ENCODE measurements at regions of chr2 and their contacts with region 1.

Region 1: DNA sequence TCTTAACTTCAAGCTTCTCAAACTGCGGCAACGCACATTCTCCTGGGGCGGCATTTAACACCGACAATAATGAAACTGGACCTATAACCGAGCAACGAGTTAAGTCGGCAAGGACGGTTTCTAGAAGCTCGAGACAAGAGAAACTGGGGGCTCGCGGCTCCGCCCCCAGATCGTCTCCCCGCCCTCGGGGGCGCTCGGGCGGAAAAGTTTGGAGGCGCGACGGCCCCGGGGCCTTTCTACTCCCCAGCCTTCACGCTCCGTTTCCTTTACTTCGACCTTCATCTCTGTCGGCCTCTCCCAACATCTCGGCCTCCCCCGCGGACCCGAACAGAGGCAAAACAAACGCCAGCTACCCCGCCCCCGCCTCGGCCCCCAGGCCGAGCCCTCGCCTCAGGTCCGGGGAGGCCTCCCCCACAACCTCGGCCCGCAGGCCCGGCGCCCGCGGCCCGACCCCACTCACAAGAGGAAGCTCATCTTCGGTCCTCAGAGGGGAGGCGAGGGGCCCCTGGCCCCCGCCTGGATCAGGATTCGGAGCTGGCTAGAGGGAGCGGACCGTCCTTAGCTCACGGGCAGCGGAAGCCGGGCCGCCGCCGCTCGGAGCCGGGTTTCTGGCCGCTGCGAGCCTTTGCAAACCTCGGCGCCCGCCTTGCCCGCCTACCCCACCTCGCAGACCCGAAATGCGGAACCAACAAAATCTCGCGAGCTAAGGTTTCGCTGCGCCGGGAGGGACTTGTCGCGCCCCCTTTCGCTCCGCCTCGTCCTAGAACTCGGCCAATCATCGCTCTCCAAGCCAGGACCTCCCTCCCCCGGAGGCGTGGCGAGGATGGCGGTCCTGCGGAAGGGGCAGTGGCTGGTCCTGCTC is at the start of gene MOB1A:
- DNase-seq: peak; percentile 94 to 98 (median 97)
- ATAC-seq: peak; percentile 90 to 91
- H3K4me3 Mint-ChIP-seq: peak within 1 kb of the TSS; percentile 82 to 95 (median 91)
- H3K27ac Mint-ChIP-seq: peak within 1 kb of the TSS; percentile 82 to 98 (median 96)
- H3K4me1 Mint-ChIP-seq: peaks cover 6 to 55% (median 34%) of the 10 kb centered on the region in 4 donors
- H3K27me3 Mint-ChIP-seq: no peaks in the 10 kb centered on the region
- polyA plus RNA-seq, gene MOB1A: 111 to 152 (median 145) TPM

Region 2: GRCh38 chr2:73828818-73829570 is 349.4 kb before region 1 on chr2 and contains the start of gene STAMBP:
- POLR2A ChIA-PET with region 1: interaction called, 10 read pairs
- DNase-seq: peak; percentile 78 to 96 (median 88)
- ATAC-seq: peak; percentile 88 to 94
- H3K4me3 Mint-ChIP-seq: peak within 1 kb of the TSS; percentile 90 to 99 (median 96)
- H3K27ac Mint-ChIP-seq: peak within 1 kb of the TSS; percentile 93 to 99 (median 97)
- H3K4me1 Mint-ChIP-seq: peaks cover 37 to 60% (median 51%) of the 10 kb centered on the region in 4 donors
- H3K27me3 Mint-ChIP-seq: no peaks in the 10 kb centered on the region
- polyA plus RNA-seq, gene STAMBP: 32.3 to 44.3 (median 35.0) TPM

Region 3: DNA sequence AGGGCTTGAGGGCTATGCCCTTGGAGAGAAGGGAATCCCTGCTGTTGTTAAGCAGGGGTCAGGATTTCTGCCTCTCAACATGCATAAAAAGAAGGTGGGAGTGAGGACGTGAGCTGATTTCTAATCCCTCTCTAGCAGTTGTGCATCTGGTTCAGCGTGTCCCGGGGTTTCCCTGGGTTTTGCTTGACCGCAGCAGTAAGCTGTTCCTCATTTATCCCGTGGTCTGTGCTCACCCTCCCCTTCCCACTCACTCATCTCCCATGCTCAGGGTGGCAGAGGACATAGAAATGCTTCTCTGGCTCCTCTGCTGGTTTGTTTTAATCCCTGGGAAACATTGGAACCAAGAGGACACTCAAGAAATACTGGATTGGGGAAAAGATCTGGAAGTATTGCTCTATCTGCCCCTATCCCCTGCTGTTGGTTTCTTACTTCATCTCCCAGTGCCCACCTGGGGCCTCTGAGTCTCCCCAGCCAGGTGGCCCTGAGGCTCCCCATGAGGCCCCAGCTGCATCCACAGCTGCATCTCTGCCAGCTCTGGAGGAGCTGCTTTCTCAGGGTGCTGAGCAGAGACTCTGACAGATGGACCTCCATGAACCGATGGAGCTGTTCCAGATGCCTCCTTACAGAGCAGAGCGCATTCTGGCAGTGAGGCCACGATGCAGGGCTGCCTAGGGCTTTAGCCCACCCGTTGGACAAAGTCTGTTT is 157.6 kb before region 1 on chr2:
- POLR2A ChIA-PET with region 1: no interaction called
- DNase-seq: no peak
- ATAC-seq: peak in 1 of 2 donors; percentile 35
- H3K4me3 Mint-ChIP-seq: peak overlapping the region in 3 of 10 donors; percentile 11 to 45 (median 43)
- H3K27ac Mint-ChIP-seq: peak overlapping the region in 8 of 10 donors; percentile 58 to 86 (median 78)
- H3K4me1 Mint-ChIP-seq: peaks cover 22 to 75% (median 65%) of the 10 kb centered on the region in 4 donors
- H3K27me3 Mint-ChIP-seq: no peaks in the 10 kb centered on the region

Region 4: DNA sequence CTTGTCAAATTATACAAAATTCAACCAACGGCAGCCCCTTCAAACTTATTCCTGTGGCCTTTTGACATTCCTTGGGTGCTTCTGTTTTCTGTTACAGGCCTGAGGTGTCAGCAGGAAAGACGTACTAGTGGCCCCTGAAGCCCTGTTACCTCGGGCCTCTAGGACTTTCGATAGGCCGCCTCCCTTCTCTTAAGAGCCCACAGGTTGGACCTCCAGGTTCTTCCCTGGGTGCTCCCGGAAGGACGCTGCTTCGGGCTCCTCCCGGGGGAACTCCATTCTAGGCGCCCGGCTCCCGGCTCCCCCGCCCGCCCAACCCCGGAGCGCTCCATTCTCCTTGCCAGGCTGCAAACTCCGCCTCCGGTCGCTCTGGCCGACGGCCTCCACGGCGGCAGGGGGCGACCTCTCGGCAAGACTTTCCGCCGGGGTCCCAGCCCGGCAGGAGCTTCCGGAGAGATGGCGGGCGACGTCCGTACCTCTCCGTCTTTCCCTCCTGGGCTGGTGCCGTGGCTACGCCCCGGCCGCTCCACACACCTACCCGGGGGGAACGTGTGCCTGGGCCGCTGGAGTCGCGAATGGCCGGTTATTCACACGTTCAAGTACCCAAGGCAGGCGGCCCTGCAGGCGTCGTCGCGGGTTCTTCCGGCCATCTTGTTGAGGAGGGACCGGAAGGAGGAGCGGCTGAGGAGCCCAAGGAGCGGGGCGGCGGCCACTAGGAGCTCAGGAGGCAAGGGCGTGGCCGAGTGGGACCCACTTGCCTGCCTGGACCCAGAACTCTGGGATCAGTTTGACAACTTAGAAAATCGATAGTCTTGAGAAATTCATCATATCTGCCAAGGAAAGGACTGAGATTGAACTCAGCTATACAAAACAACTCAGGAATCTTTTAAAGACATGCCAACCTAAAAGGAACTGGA is 58.3 kb before region 1 on chr2:
- POLR2A ChIA-PET with region 1: interaction called, 17 read pairs
- DNase-seq: peak; percentile 68 to 88 (median 82)
- ATAC-seq: peak; percentile 97
- H3K4me3 Mint-ChIP-seq: peak overlapping the region; percentile 83 to 93 (median 86)
- H3K27ac Mint-ChIP-seq: peak overlapping the region; percentile 72 to 96 (median 93)
- H3K4me1 Mint-ChIP-seq: peaks cover 0 to 7% (median 5%) of the 10 kb centered on the region in 4 donors
- H3K27me3 Mint-ChIP-seq: peaks cover 0 to 4% (median 2%) of the 10 kb centered on the region in 5 donors

Region 5: DNA sequence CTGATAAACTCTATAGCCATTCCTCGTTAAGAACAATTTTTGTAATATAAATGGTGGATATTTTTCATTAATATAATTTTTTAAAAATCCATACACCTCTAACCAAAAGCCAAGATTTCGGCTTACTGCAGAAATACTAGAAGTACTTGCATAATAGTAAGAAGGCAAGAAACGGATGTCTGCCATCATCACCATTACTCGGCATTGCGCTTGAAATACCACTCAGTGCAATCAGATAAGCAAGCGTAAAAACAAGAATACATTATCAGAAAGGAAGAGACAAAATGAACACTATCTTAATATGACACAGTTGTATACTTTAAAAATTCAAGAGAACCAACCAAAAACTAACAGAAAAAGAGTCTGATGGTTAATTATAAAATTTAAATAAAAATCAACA is 15.5 kb before region 1 on chr2:
- POLR2A ChIA-PET with region 1: interaction called, 14 read pairs
- DNase-seq: no peak
- ATAC-seq: no peak
- H3K4me3 Mint-ChIP-seq: no peak overlapping the region
- H3K27ac Mint-ChIP-seq: no peak overlapping the region
- H3K4me1 Mint-ChIP-seq: peaks cover 0 to 24% (median 5%) of the 10 kb centered on the region in 4 donors
- H3K27me3 Mint-ChIP-seq: no peaks in the 10 kb centered on the region

Region 6: DNA sequence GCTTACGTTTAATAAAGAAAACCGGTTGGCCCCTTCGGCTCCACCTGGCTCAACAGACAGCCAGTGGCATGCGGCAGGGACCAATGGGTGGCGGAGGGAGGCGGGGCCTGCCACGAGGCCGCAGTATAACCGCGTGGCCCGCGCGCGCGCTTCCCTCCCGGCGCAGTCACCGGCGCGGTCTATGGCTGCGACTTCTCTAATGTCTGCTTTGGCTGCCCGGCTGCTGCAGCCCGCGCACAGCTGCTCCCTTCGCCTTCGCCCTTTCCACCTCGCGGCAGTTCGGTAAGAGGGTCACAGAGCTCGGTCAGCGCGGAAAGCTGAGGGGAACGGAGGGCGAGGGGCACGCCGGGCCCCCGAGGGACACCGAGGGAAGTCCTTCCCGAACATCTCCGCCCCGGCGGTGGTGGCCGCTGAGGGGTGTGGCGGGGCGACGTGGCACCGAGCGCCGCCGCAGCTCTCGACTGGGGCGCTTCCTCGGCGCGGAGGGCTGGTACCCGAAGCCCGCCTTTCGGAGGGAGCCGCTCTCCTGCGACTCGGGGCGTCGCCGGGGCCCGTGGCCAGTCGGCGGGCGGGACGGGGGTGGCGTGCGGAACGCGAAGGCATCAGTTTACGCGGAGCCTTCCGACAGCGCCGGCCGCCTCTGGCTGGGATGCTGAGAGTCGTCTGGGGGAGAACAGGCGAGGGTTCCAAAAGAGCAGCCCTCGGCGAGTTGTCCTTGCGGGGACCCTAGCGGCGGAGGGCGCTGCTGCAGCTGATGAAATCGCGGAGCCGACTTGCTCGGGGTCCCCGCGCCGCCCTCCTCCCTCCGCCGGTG is 20.2 kb after region 1 on chr2 and contains the start of gene MTHFD2:
- POLR2A ChIA-PET with region 1: interaction called, 80 read pairs
- DNase-seq: peak; percentile 79 to 93 (median 85)
- ATAC-seq: peak; percentile 86 to 88
- H3K4me3 Mint-ChIP-seq: peak within 1 kb of the TSS; percentile 95 to 100 (median 98)
- H3K27ac Mint-ChIP-seq: peak within 1 kb of the TSS; percentile 97 to 99 (median 99)
- H3K4me1 Mint-ChIP-seq: peaks cover 16 to 33% (median 25%) of the 10 kb centered on the region in 4 donors
- H3K27me3 Mint-ChIP-seq: peaks cover 0 to 3% (median 0%) of the 10 kb centered on the region in 5 donors
- polyA plus RNA-seq, gene MTHFD2: 4.8 to 5.9 (median 5.4) TPM

Region 7: DNA sequence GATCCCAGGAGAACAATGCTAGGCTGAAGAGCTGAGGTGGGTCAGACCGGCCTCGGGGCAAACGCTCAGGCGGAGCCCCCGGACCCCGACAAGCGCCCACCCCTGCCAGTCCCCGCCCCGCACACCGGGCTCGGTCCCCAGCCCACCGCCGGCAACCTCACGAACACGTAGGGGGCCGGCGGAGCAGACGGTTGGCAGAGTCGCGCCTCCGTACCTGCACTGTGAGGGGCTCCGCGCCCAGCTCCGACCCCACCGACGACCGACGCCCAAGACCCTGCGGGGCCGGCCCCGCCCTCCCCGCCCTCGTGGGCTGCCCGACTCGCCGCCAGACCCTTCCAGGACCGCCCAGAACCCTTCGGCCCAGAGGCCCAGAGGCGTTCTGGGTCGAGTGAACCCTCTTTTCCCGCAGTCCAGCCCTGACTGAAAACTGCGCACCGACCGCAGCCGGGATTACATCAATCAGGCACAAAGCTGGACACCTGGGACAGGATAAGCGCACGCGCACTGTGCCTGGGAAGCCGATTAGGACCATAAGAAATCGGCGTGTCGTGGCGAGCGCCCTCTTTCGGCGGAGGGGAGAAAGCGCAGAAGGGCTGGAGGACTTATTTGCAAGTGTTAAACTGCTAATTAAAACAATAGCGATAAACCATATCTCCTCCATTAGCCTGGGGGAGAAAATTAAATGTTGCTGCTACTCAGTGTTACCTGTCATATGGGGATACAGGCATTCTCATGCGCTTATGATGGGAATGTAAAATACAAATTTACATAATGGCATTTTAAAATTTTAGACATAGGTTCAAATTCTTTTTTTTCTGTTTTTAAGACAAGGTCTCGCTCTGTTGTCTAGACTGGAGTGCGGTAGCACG is 213.4 kb after region 1 on chr2:
- POLR2A ChIA-PET with region 1: interaction called, 10 read pairs
- DNase-seq: peak; percentile 86 to 99 (median 96)
- ATAC-seq: peak; percentile 85 to 92
- H3K4me3 Mint-ChIP-seq: peak overlapping the region in 3 of 10 donors; percentile 94 to 99 (median 99)
- H3K27ac Mint-ChIP-seq: peak overlapping the region in 9 of 10 donors; percentile 99 to 100 (median 100)
- H3K4me1 Mint-ChIP-seq: peaks cover 4 to 9% (median 5%) of the 10 kb centered on the region in 4 donors
- H3K27me3 Mint-ChIP-seq: peaks cover 0 to 5% (median 1%) of the 10 kb centered on the region in 5 donors

Measured in naive thymus-derived CD8-positive, alpha-beta T cell (primary cell).